CD8-positive, alpha-beta T cell (primary cell): ENCODE measurements at regions of chr17 and their contacts with region 1.

Region 1: GRCh38 chr17:17752089-17752820 is 71.0 kb downstream of the RAI1 start:
- DNase-seq: peak; percentile 95 to 98 (median 97)
- ATAC-seq: peak; percentile 84
- H3K4me3 ChIP-seq: peak overlapping the region; percentile 68 to 75
- H3K4me3 Mint-ChIP-seq: peak overlapping the region; percentile 90
- H3K27ac ChIP-seq: peak overlapping the region; percentile 94 to 96
- H3K27ac Mint-ChIP-seq: peak overlapping the region; percentile 99
- H3K4me1 ChIP-seq: peaks cover 79% of the 10 kb centered on the region
- H3K4me1 Mint-ChIP-seq: peaks cover 82% of the 10 kb centered on the region
- H3K27me3 ChIP-seq: no peaks in the 10 kb centered on the region
- H3K27me3 Mint-ChIP-seq: no peaks in the 10 kb centered on the region
- CTCF ChIP-seq: no peak

Region 2: GRCh38 chr17:17063546-17064122 is 688.6 kb before region 1 on chr17:
- CTCF ChIA-PET with region 1: no interaction called
- POLR2A ChIA-PET with region 1: no interaction called
- intact Hi-C with region 1: no loop called
- DNase-seq: peak in 3 of 9 experiments; percentile 38 to 48 (median 39)
- ATAC-seq: peak; percentile 57
- H3K4me3 ChIP-seq: no peak overlapping the region
- H3K4me3 Mint-ChIP-seq: peak overlapping the region; percentile 4
- H3K27ac ChIP-seq: no peak overlapping the region
- H3K27ac Mint-ChIP-seq: peak overlapping the region; percentile 46
- H3K4me1 ChIP-seq: peaks cover 19% of the 10 kb centered on the region
- H3K4me1 Mint-ChIP-seq: peaks cover 66% of the 10 kb centered on the region
- H3K27me3 ChIP-seq: no peaks in the 10 kb centered on the region
- H3K27me3 Mint-ChIP-seq: no peaks in the 10 kb centered on the region
- CTCF ChIP-seq: no peak

Region 3: GRCh38 chr17:17681187-17681848 is 70.9 kb before region 1 on chr17 and contains the start of gene RAI1:
- CTCF ChIA-PET with region 1: no interaction called
- POLR2A ChIA-PET with region 1: no interaction called
- intact Hi-C with region 1: loop called (anchors 1 kb)
- DNase-seq: peak; percentile 51 to 89 (median 73)
- ATAC-seq: peak; percentile 58
- H3K4me3 ChIP-seq: peak within 1 kb of the TSS; percentile 74
- H3K4me3 Mint-ChIP-seq: peak within 1 kb of the TSS; percentile 93
- H3K27ac ChIP-seq: peak within 1 kb of the TSS; percentile 67 to 90
- H3K27ac Mint-ChIP-seq: peak within 1 kb of the TSS; percentile 77
- H3K4me1 ChIP-seq: peaks cover 34% of the 10 kb centered on the region
- H3K4me1 Mint-ChIP-seq: peaks cover 34% of the 10 kb centered on the region
- H3K27me3 ChIP-seq: no peaks in the 10 kb centered on the region
- H3K27me3 Mint-ChIP-seq: no peaks in the 10 kb centered on the region
- CTCF ChIP-seq: peak; percentile 50
- total RNA-seq, gene RAI1: 22.9 to 23.5 TPM

Region 4: DNA sequence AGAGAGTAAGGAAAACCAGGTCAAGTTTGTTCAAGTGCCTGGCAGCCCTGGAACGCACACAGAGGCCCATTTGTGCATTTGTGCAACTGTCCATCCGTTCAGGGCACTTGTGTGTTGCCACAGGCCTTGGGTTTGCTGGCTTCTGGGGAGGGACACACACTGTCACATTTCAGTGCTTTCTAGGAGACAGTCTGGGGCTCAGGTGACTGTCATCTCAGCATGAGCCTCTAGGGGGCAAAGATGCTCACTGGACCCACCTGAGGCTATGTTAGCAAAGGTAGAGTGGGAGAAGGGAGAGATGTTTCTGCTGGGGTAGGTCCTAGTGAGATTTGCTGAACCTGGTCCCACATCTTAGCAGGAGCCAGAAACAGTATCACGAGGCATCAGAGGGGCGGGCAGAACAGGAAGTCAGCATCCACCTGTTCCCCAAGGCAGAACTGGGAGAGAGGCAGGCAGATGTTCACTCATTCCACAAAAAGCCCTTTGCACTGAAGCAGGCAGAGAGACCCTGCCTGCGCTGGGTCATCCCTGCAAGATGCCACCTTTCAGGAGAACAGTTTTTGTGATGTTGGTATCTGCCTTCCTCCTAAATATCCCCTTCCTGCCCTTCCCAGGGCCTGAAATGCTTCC is 22.5 kb before region 1 on chr17:
- CTCF ChIA-PET with region 1: interaction called, 3 read pairs
- POLR2A ChIA-PET with region 1: no interaction called
- intact Hi-C with region 1: loop called (anchors 2 kb)
- DNase-seq: peak; percentile 29 to 78 (median 67)
- ATAC-seq: peak; percentile 90
- H3K4me3 ChIP-seq: no peak overlapping the region
- H3K4me3 Mint-ChIP-seq: no peak overlapping the region
- H3K27ac ChIP-seq: no peak overlapping the region
- H3K27ac Mint-ChIP-seq: peak overlapping the region; percentile 58
- H3K4me1 ChIP-seq: peaks cover 33% of the 10 kb centered on the region
- H3K4me1 Mint-ChIP-seq: peaks cover 31% of the 10 kb centered on the region
- H3K27me3 ChIP-seq: no peaks in the 10 kb centered on the region
- H3K27me3 Mint-ChIP-seq: no peaks in the 10 kb centered on the region
- CTCF ChIP-seq: peak; percentile 59

Region 5: GRCh38 chr17:17783116-17783824 is 31.0 kb after region 1 on chr17:
- CTCF ChIA-PET with region 1: interaction called, 10 read pairs
- POLR2A ChIA-PET with region 1: interaction called, 3 read pairs
- intact Hi-C with region 1: loop called (anchors 1 to 2 kb)
- DNase-seq: peak; percentile 24 to 79 (median 65)
- ATAC-seq: peak; percentile 58
- H3K4me3 ChIP-seq: peak overlapping the region; percentile 50 to 54
- H3K4me3 Mint-ChIP-seq: peak overlapping the region; percentile 85
- H3K27ac ChIP-seq: peak overlapping the region in 1 of 2 experiments; percentile 36
- H3K27ac Mint-ChIP-seq: peak overlapping the region; percentile 41
- H3K4me1 ChIP-seq: peaks cover 30% of the 10 kb centered on the region
- H3K4me1 Mint-ChIP-seq: peaks cover 30% of the 10 kb centered on the region
- H3K27me3 ChIP-seq: peaks cover 0 to 4% of the 10 kb centered on the region in 2 experiments
- H3K27me3 Mint-ChIP-seq: no peaks in the 10 kb centered on the region
- CTCF ChIP-seq: peak; percentile 26

Region 6: DNA sequence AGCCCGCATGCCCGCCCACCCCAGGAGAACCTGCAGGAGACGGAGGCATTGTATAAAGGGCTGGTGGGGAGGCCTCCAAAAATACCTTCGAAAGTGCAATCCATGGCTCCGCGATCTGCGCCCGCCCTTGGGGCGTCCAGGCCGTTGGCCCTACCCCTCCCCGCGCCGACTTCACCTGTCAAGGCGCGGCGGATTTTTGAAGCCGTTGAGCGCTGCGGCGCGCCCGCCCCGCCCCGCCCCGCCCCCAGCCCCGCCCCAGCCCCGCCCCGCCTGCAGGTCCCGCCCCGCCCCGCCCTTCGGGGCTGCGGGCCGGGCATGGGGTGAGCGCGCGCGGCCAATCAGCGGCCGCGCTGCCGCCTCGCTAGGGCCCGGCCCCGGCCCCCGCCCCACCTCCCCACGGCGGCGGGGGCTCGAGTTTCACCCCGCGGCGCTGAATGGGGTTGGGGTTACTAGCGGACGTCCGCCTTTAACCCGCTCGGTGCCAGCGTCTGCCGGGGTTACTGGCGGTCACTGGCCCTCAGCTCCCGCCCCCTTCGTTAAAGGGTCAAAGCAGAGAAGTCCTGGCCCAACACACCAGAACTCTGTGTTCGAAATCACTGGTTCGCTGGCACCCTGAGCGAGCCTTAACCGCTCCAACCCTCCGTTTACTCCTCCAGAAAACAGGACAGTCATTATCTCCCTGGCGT is 71.3 kb after region 1 on chr17:
- CTCF ChIA-PET with region 1: no interaction called
- POLR2A ChIA-PET with region 1: no interaction called
- intact Hi-C with region 1: loop called in 1 of 2 experiments (anchors 1 kb)
- DNase-seq: peak; percentile 63 to 92 (median 80)
- ATAC-seq: peak; percentile 87
- H3K4me3 ChIP-seq: peak overlapping the region; percentile 46 to 55
- H3K4me3 Mint-ChIP-seq: peak overlapping the region; percentile 81
- H3K27ac ChIP-seq: peak overlapping the region; percentile 50 to 85
- H3K27ac Mint-ChIP-seq: peak overlapping the region; percentile 95
- H3K4me1 ChIP-seq: peaks cover 95% of the 10 kb centered on the region
- H3K4me1 Mint-ChIP-seq: peaks cover 91% of the 10 kb centered on the region
- H3K27me3 ChIP-seq: no peaks in the 10 kb centered on the region
- H3K27me3 Mint-ChIP-seq: no peaks in the 10 kb centered on the region
- CTCF ChIP-seq: no peak

Region 7: DNA sequence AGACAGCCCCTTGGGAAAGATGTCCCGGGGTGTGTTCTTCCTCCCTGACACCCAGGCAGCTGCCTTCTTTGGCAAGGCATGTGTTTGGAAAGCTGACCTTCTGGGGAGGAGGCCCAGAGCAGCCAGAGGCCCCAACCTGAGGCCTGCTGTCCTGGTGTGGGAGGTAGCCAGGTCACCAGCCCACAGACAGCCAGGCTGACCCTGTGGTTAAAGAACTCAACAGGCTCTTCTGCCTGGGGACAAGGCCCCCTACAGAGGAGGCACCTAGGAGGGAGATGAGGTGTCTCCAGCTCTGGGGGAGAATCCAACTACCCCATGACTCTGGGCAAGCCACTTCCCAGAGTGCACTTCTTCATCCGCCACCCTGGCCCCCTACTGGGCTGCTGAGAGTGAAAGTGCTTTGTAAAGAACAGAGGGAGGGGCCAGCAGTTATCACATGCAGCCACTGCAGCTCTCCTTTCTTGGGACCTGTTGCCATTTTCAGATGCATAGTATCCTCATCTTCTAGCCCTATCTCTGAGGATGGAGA is 97.7 kb after region 1 on chr17:
- CTCF ChIA-PET with region 1: no interaction called
- POLR2A ChIA-PET with region 1: no interaction called
- intact Hi-C with region 1: loop called in 1 of 2 experiments (anchors 1 kb)
- DNase-seq: peak; percentile 35 to 92 (median 72)
- ATAC-seq: peak; percentile 76
- H3K4me3 ChIP-seq: peak overlapping the region in 1 of 2 experiments; percentile 17
- H3K4me3 Mint-ChIP-seq: peak overlapping the region; percentile 66
- H3K27ac ChIP-seq: peak overlapping the region; percentile 60 to 93
- H3K27ac Mint-ChIP-seq: peak overlapping the region; percentile 96
- H3K4me1 ChIP-seq: peaks cover 70% of the 10 kb centered on the region
- H3K4me1 Mint-ChIP-seq: peaks cover 71% of the 10 kb centered on the region
- H3K27me3 ChIP-seq: no peaks in the 10 kb centered on the region
- H3K27me3 Mint-ChIP-seq: no peaks in the 10 kb centered on the region
- CTCF ChIP-seq: no peak

Region 8: DNA sequence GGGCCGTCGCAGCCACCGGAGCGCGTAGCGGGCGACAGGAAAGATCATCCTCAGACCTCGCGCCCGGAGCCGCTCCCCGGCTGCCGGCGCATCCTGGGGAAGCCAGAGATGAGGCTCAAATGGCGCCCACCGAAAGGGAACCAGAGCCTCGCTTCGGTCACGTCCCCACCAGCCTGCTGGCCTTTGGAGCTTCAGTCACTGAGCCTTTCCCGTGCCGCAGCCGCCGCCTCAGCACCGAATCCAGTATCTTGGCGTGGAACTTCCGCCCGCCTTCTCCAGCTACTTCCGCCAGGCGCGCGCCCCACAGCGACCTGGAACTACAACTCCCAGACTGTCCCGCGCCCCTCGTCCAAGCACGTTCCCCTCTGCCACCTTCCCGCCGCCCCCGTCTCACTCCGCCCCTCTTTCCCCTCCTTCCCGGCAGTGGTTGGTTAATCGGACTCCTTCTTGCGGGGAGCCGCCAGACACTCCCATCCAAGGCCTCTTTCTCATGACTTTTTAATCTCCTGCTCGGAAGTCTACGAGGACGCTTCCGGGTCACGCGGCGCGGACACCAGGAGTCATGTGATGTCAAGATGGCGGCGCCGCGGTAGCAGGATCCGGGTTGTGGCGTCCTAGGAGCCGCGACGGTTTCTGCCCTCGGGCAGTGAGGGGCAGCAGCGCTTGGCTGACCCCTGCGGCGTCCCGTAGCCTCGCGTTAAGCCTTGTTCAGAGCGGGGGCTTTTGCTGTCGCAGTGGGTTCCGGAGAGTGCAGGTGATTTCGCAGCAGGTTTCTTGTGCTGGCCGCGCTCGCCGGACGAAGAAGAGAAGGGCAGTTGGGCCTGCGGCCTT is 562.7 kb after region 1 on chr17 and contains the starts of genes SMCR8 and TOP3A:
- CTCF ChIA-PET with region 1: no interaction called
- POLR2A ChIA-PET with region 1: no interaction called
- intact Hi-C with region 1: loop called in 1 of 2 experiments (anchors 5 kb)
- DNase-seq: peak; percentile 95 to 99 (median 97)
- ATAC-seq: peak; percentile 95
- H3K4me3 ChIP-seq: peak within 1 kb of the TSS; percentile 88 to 93
- H3K4me3 Mint-ChIP-seq: peak within 1 kb of the TSS; percentile 90
- H3K27ac ChIP-seq: peak within 1 kb of the TSS; percentile 98 to 99
- H3K27ac Mint-ChIP-seq: peak within 1 kb of the TSS; percentile 97
- H3K4me1 ChIP-seq: peaks cover 67% of the 10 kb centered on the region
- H3K4me1 Mint-ChIP-seq: peaks cover 76% of the 10 kb centered on the region
- H3K27me3 ChIP-seq: no peaks in the 10 kb centered on the region
- H3K27me3 Mint-ChIP-seq: no peaks in the 10 kb centered on the region
- CTCF ChIP-seq: no peak
- total RNA-seq, gene SMCR8: 51.9 to 53.1 TPM
- total RNA-seq, gene TOP3A: 28.8 to 30.9 TPM